Activated B cell treated with CpG ODN at 0.5 μM for 24 hours (primary cell): ENCODE measurements at regions of chr13 and their contacts with region 1.

Region 1: DNA sequence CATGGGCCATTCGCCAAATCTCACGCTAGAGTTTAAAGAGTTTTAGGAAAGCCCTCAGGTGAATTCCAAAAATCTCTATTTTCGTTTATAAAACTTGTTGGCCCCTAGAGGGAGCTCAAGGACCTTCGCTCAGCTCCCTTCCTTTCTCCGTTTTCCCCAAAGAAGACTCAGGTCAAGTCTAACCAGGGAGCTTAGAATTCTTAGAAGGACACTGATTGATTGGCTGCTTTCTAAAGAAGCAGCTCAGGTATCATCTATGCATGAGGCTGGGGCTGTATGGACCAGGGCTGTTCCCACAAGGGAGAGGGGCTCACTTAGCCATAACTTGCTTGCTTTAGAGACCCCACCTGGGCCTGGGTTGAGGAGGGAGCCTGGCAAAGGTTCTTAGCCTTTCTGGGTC is 20.5 kb downstream of the DZIP1 start:
- DNase-seq: no peak
- ATAC-seq: no peak
- H3K4me3 Mint-ChIP-seq: no peak overlapping the region
- H3K27ac Mint-ChIP-seq: no peak overlapping the region
- H3K4me1 Mint-ChIP-seq: no peaks in the 10 kb centered on the region
- H3K27me3 Mint-ChIP-seq: peaks cover 11% of the 10 kb centered on the region
- CTCF ChIP-seq: no peak

Region 2: GRCh38 chr13:95982144-95982543 is 358.1 kb after region 1 on chr13:
- CTCF ChIA-PET with region 1: interaction called, 6 read pairs
- POLR2A ChIA-PET with region 1: no interaction called
- intact Hi-C with region 1: loop called (anchors 1 kb)
- DNase-seq: no peak
- ATAC-seq: no peak
- H3K4me3 Mint-ChIP-seq: no peak overlapping the region
- H3K27ac Mint-ChIP-seq: no peak overlapping the region
- H3K4me1 Mint-ChIP-seq: no peaks in the 10 kb centered on the region
- H3K27me3 Mint-ChIP-seq: no peaks in the 10 kb centered on the region
- CTCF ChIP-seq: no peak

Region 3: DNA sequence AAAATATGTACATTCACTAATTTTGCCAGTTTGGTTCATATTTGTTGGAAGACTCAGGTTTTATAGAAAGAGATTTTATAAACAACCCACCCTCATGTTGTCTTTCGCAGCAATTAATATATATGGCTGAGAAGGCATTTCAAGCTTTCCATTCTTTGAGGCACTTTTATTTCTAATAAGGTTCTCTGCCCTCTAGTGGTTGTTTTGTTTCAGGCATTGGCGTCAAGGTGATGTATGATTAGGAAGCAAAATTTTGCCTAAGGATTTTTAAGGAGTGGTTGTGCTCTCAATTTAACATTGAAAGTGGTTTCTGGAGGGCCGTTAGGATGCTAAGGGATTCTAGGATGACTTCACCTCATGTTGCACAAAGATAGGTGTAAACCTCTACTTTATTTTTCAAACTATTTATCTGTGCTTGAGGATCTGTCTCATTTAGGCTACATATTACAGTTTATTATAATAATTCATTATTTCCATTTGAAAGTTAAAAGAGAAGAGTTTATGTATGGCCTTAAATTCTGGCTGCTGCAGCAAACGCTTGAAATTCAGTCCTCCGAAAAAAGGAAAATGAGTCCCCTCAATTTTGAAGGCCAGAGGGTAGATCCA is 1334.4 kb after region 1 on chr13:
- CTCF ChIA-PET with region 1: no interaction called
- POLR2A ChIA-PET with region 1: no interaction called
- intact Hi-C with region 1: loop called (anchors 10 kb)
- DNase-seq: no peak
- ATAC-seq: no peak
- H3K4me3 Mint-ChIP-seq: no peak overlapping the region
- H3K27ac Mint-ChIP-seq: no peak overlapping the region
- H3K4me1 Mint-ChIP-seq: no peaks in the 10 kb centered on the region
- H3K27me3 Mint-ChIP-seq: no peaks in the 10 kb centered on the region
- CTCF ChIP-seq: no peak